ENCODE measurements at regions of chr2 and their contacts with region 1.

Region 1: GRCh38 chr2:133171393-133172004 is 396.8 kb downstream of the NCKAP5 start:
- DNase-seq: peak in 1 of 2 donors; percentile 83
- H3K4me3 ChIP-seq: no peak overlapping the region
- H3K27ac ChIP-seq: no peak overlapping the region
- H3K4me1 ChIP-seq: no peaks in the 10 kb centered on the region
- H3K27me3 ChIP-seq: peaks cover 0 to 3% (median 0%) of the 10 kb centered on the region in 3 donors
- CTCF ChIP-seq: peak in 4 of 7 experiments; percentile 32 to 62 (median 58)
- EP300 ChIP-seq: no peak
- POLR2A ChIP-seq: no peak

Region 2: GRCh38 chr2:132547074-132547687 is 624.3 kb before region 1 on chr2:
- intact Hi-C with region 1: loop called (anchors 5 kb)
- DNase-seq: peak; percentile 81 to 89
- H3K4me3 ChIP-seq: no peak overlapping the region
- H3K27ac ChIP-seq: no peak overlapping the region
- H3K4me1 ChIP-seq: peaks cover 0 to 17% (median 4%) of the 10 kb centered on the region in 4 donors
- H3K27me3 ChIP-seq: no peaks in the 10 kb centered on the region
- CTCF ChIP-seq: peak in 5 of 7 experiments; percentile 43 to 66 (median 62)
- EP300 ChIP-seq: no peak
- POLR2A ChIP-seq: no peak

Measured in stomach (tissue), 19 donors.